Endothelial cell of umbilical vein (primary cell): ENCODE measurements at regions of chr11 and their contacts with region 1.

Region 1: DNA sequence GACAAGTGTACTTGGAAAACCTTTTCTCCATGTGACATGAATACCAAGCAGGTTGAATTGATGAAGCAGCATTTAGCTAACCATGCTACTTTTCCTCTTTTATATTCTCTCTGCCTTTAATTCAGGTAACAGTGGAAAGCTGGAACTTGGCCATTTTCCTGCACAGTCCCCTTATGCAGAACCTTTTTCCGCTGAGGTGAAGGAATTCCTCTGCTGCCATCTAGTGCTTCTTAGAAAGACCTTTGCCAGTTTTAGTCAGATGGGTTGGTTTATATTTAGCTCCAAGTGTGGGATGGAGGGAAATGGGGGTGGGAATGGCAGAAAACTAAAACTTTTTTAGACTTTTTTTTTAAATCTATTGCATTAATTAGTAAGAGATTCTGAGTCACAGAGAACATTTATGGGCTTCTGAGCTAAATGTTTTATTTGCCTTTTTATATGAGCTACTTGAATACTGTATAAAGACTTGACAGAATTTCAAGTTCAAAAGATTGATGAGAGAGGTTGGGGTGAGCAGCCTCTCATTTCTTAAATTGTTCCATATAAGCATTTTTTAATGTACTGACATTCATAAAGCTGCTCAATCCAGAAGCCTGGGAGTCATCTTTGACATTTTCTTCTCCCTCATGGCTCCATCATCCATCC is 153.9 kb upstream of the ZC3H12C start:
- DNase-seq: peak; percentile 80
- H3K4me3 ChIP-seq: no peak overlapping the region
- H3K27ac ChIP-seq: no peak overlapping the region
- H3K4me1 ChIP-seq: no peaks in the 10 kb centered on the region
- H3K27me3 ChIP-seq: no peaks in the 10 kb centered on the region
- CTCF ChIP-seq: peak; percentile 57 to 61
- POLR2A ChIP-seq: no peak

Region 2: GRCh38 chr11:109707411-109707810 is 231.9 kb before region 1 on chr11:
- CTCF ChIA-PET with region 1: interaction called, 4 read pairs
- POLR2A ChIA-PET with region 1: no interaction called
- dilution Hi-C with region 1: no loop called
- intact Hi-C with region 1: loop called (anchors 10 kb)
- DNase-seq: no peak
- H3K4me3 ChIP-seq: no peak overlapping the region
- H3K27ac ChIP-seq: no peak overlapping the region
- H3K4me1 ChIP-seq: no peaks in the 10 kb centered on the region
- H3K27me3 ChIP-seq: no peaks in the 10 kb centered on the region
- CTCF ChIP-seq: no peak
- POLR2A ChIP-seq: no peak

Region 3: GRCh38 chr11:109859045-109859724 is 80.1 kb before region 1 on chr11:
- CTCF ChIA-PET with region 1: interaction called, 80 read pairs
- POLR2A ChIA-PET with region 1: no interaction called
- dilution Hi-C with region 1: no loop called
- intact Hi-C with region 1: no loop called
- DNase-seq: peak; percentile 61
- H3K4me3 ChIP-seq: no peak overlapping the region
- H3K27ac ChIP-seq: no peak overlapping the region
- H3K4me1 ChIP-seq: peaks cover 11% of the 10 kb centered on the region
- H3K27me3 ChIP-seq: no peaks in the 10 kb centered on the region
- CTCF ChIP-seq: no peak
- POLR2A ChIP-seq: no peak

Region 4: DNA sequence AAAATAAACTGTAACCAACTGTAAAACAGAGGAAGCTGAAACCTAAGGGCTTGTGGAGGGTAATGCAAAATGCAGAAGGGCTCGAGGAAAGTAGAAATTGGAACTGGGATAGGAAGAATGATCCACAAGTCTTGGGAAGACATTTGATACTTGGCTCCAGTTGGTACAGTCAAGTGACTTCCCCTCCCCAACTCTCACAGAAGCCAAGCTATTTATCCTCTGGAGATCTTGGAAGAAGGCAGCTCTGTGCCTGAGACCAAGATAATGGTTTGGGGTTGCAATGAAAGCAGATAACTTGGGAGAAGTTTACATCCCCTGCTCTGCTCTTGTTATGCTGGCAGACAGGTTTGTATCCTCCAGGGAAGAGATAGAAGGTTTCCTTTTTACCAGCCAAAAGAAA is 45.0 kb before region 1 on chr11:
- CTCF ChIA-PET with region 1: interaction called, 10 read pairs
- POLR2A ChIA-PET with region 1: no interaction called
- dilution Hi-C with region 1: no loop called
- intact Hi-C with region 1: no loop called
- DNase-seq: no peak
- H3K4me3 ChIP-seq: no peak overlapping the region
- H3K27ac ChIP-seq: no peak overlapping the region
- H3K4me1 ChIP-seq: no peaks in the 10 kb centered on the region
- H3K27me3 ChIP-seq: peaks cover 6 to 7% of the 10 kb centered on the region in 2 experiments
- CTCF ChIP-seq: no peak
- POLR2A ChIP-seq: no peak

Region 5: DNA sequence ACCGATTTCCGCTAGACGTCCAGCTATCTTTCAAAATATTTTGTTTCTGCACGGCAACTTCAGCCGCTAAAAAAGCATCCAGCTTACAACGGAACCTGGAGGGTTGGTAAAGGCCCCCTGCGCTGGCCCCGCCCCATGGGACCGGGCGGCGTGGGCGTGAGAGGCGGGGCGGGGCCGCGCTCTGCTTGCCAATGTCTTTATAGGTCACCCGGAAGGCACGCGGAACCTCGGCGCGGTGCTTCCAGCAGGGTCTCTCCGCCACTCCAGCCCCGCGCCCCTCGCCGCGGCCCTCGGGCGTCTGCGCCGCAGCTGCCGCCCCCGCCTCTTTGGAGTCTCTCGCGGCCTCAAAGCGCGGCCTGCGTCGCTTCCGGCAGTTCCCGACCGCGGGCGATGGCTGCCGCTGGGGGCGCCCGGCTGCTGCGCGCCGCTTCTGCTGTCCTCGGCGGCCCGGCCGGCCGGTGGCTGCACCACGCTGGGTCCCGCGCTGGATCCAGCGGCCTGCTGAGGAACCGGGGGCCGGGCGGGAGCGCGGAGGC is 490.5 kb after region 1 on chr11 and contains the start of gene FDX1:
- CTCF ChIA-PET with region 1: interaction called, 11 read pairs
- POLR2A ChIA-PET with region 1: no interaction called
- dilution Hi-C with region 1: no loop called
- intact Hi-C with region 1: loop called (anchors 2 kb)
- DNase-seq: peak; percentile 84
- H3K4me3 ChIP-seq: peak within 1 kb of the TSS; percentile 23 to 75 (median 57)
- H3K27ac ChIP-seq: peak within 1 kb of the TSS; percentile 72
- H3K4me1 ChIP-seq: peaks cover 27% of the 10 kb centered on the region
- H3K27me3 ChIP-seq: no peaks in the 10 kb centered on the region
- CTCF ChIP-seq: peak; percentile 50 to 59
- POLR2A ChIP-seq: no peak
- total RNA-seq, gene FDX1: 9.9 and 11.0 TPM in 2 replicates

Region 6: DNA sequence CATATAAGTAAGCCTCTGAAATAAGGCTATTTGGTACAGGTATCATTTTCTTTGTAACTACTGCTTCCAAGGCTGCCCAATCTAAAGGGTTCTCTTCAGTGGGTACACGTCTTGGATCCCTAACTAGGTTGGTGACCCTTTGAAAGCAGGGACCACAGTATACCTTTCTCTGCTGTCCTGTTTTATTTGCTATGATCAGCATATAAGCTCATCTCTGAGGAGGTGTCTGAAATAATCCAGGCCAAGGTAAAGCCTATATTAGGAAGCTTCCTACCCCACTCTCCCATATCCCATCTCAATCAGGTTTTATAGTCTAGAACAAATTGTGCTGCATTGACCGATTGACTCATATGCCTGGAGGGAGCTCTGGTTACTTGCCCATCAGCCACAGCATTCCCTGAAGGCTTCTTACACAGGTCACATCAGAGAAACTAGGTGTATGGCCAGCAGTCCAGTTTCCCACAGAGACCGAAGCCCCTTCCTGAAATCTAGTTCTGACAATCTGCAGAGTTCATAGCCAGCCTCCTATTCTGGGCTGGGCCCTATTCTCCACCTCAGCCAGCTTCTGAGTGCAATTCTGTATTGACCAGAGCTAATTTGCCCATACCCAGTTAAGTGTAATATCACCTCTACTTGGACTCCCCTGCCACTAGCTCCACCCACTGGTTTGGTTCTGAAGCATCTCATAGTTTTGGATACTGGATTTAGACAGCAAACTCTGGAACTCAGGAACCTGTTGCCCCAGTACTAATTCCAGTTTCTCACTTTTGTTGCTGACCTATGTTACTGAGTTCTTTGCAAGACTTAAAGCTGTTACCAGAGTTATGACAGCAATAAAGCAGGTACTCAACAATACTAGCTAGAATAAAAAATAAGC is 835.1 kb after region 1 on chr11:
- CTCF ChIA-PET with region 1: no interaction called
- POLR2A ChIA-PET with region 1: no interaction called
- dilution Hi-C with region 1: no loop called
- intact Hi-C with region 1: no loop called
- DNase-seq: no peak
- H3K4me3 ChIP-seq: no peak overlapping the region
- H3K27ac ChIP-seq: no peak overlapping the region
- H3K4me1 ChIP-seq: peaks cover 21% of the 10 kb centered on the region
- H3K27me3 ChIP-seq: no peaks in the 10 kb centered on the region
- CTCF ChIP-seq: no peak
- POLR2A ChIP-seq: no peak